ENCODE measurements at regions of chr10 and their contacts with region 1.

Region 1: GRCh38 chr10:6088721-6089390 is at the start of gene RBM17:
- DNase-seq: peak; percentile 77
- H3K4me3 ChIP-seq: peak within 1 kb of the TSS; percentile 91
- CTCF ChIP-seq: peak; percentile 99

Region 2: DNA sequence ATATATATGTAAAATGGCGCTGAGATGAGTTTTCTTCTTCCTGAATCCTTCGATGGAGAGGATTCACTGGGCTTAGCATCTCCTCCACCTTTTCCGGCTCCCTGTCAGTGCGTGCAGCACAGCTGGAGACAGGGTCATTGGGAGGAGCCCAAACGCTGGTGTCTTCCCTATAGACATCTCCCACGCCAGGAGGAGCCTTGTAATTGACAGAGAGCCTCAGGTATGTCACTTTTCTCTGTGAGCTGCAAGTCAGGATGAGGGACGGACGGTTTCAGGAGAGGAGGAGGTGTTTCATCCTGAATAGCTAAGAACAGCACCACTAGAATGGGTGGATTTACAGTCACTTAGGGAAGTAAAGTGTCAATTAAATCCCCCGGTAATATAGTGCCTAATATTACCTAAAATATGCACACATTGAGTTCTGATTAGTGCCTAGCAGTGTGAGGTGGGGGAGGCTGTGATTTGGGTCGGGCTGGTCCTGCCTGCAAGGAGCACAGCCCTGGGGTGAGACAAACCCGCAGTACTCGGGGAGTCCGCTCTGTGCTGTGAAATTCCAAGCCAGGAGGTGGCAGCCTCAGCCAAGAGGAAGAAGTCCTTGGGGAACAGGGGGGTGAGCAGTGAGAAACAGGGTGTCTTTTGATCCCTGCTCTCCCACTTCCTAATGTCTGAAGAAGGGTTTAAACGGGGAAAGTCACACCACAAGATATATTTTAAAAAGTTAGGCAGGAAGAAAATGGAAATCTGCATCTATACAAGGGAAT is 139.7 kb before region 1 on chr10:
- CTCF ChIA-PET with region 1: interaction called, 51 read pairs
- POLR2A ChIA-PET with region 1: no interaction called
- DNase-seq: no peak
- H3K4me3 ChIP-seq: no peak overlapping the region
- CTCF ChIP-seq: peak; percentile 67

Region 3: DNA sequence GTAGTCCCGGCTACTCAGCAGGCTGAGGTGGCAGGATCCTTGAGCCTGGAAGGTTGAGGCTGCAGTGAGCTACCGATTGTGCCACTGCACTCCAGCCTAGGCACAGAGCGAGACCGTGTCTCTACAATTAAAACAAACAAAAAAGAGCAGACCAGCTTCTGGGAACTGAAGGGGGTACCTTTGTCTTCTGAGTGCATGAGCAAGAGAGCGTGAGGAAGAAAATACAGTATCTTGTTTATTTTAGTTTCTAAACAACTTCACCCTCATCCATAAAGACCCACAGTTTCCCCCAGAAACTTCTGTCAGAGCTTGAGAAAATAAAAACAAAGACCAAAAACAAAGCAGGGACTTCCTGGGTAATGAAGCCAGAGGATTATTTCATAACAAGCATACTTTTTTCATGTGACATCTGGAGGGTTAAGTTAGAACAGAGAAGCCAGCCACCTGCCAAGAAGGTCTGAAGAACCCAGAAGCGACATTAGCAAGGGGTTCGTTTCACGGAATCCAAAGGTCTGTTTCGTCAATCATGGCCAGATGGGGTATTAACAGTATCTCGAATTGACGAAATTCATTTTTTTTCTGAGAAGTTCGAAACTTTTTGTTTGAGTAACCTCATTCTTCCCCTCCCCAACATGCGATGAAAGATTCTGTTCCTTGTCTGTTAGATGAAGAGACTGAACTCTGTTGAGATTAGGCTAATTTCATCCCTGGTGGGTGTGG is 16.5 kb before region 1 on chr10:
- CTCF ChIA-PET with region 1: interaction called, 79 read pairs
- POLR2A ChIA-PET with region 1: no interaction called
- DNase-seq: no peak
- H3K4me3 ChIP-seq: no peak overlapping the region
- CTCF ChIP-seq: no peak

Region 4: GRCh38 chr10:6108603-6109443 is 20.0 kb after region 1 on chr10:
- CTCF ChIA-PET with region 1: interaction called, 22 read pairs
- POLR2A ChIA-PET with region 1: no interaction called
- DNase-seq: no peak
- H3K4me3 ChIP-seq: no peak overlapping the region
- CTCF ChIP-seq: peak; percentile 30

Region 5: DNA sequence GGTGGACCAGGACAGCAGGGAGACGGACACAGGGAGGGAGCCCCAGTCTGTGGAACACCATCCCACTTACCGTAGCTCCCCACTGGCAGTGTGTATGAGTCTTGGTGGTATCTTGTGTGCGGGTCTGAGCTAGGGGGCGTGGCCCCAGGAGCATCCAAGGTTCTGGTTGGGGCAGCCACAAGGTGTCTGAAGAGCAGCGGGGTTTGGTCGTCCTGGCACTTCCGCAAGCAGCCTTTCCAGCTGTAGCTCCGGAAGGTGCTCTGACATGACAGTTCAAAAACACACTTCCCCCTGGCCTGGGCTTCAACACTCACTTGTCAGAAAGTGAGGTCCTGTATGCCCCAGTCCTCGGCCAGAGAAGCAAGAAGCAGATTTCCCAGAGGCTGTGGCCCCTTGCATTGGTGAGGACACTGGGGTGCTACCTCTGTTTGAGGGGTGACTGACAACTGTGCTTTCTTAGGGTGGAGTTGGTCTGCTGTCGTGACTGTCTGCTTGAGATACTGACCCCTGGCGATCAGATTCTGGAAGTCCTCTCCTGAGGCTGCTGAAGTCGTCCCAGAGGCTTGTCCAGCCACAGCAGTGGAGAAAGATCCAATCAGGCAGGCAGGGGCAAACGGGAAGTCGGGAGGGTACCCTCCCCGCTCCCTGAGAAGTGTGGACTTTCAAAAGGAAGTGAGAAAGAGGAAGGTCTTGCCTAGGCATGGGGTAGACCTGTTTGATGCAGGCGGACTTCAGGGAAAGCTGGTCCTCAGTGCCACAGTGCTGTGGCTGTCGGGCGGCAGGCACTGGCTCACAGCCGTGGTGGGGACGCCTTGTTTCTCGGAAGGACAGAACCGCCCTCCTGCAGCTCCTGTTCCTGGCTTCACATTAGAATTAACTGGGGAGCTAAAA is 62.5 kb after region 1 on chr10:
- CTCF ChIA-PET with region 1: interaction called, 24 read pairs
- POLR2A ChIA-PET with region 1: no interaction called
- DNase-seq: no peak
- H3K4me3 ChIP-seq: no peak overlapping the region
- CTCF ChIP-seq: peak; percentile 72

Region 6: GRCh38 chr10:6409971-6410651 is 321.3 kb after region 1 on chr10:
- CTCF ChIA-PET with region 1: interaction called, 45 read pairs
- POLR2A ChIA-PET with region 1: no interaction called
- DNase-seq: no peak
- H3K4me3 ChIP-seq: no peak overlapping the region
- CTCF ChIP-seq: no peak